Vagina (tissue), 2 donors: ENCODE measurements at regions of chr1 and their contacts with region 1.

Region 1: DNA sequence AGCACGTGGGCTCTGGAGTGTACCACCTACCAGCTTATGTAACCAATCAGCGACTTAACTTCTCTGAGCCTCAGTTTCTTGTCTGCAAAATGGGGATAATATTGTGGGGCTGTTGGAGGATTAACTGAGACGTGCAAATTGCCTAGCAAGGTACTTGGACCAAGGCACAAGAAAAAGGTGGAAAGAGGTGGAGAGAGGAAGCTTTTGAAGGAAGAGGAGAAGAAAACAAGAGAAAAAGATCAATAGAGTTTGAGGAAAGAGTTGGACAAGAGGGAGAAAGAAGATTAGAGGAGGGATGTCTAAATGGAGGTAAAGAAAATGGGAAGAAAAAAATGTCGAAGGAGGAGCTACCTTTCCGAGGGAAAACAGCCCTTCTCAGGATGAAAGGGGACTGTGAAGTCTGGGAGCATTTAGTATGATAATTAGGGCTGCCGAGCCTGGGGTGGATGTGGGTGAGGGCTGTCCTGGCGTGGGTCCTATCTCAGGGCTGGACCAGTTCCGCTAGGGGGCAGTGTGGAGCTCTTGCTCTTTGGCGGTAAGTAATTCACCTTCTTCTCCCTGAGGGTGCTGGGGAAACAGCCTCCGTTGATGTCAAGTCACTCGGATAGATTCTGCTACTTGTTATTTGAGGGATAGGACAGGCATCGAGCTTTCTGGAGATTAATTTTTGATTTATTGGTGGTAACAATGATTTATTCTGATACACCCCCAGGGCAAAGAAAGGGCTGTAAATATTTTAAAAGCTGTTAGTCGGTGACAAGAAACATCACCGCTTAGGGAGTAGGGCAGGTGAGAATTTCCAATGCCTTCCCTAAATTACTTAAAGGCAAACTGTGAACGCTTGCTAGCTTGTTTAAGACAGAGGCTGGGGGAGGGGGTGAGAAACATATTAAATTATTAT is 79.0 kb upstream of the NFASC start:
- DNase-seq: no peak
- H3K4me3 ChIP-seq: no peak overlapping the region
- H3K27ac ChIP-seq: no peak overlapping the region
- H3K4me1 ChIP-seq: no peaks in the 10 kb centered on the region
- H3K27me3 ChIP-seq: no peaks in the 10 kb centered on the region
- CTCF ChIP-seq: peak in 2 of 3 experiments; percentile 31 to 38
- POLR2A ChIP-seq: no peak

Region 2: GRCh38 chr1:204572931-204573891 is 218.5 kb before region 1 on chr1:
- intact Hi-C with region 1: loop called (anchors 5 kb)
- DNase-seq: no peak
- H3K4me3 ChIP-seq: no peak overlapping the region
- H3K27ac ChIP-seq: no peak overlapping the region
- H3K4me1 ChIP-seq: peaks cover 3% of the 10 kb centered on the region
- H3K27me3 ChIP-seq: no peaks in the 10 kb centered on the region
- CTCF ChIP-seq: no peak
- POLR2A ChIP-seq: no peak